OCI-LY7 (cell line): ENCODE measurements at regions of chr12 and their contacts with region 1.

Region 1: DNA sequence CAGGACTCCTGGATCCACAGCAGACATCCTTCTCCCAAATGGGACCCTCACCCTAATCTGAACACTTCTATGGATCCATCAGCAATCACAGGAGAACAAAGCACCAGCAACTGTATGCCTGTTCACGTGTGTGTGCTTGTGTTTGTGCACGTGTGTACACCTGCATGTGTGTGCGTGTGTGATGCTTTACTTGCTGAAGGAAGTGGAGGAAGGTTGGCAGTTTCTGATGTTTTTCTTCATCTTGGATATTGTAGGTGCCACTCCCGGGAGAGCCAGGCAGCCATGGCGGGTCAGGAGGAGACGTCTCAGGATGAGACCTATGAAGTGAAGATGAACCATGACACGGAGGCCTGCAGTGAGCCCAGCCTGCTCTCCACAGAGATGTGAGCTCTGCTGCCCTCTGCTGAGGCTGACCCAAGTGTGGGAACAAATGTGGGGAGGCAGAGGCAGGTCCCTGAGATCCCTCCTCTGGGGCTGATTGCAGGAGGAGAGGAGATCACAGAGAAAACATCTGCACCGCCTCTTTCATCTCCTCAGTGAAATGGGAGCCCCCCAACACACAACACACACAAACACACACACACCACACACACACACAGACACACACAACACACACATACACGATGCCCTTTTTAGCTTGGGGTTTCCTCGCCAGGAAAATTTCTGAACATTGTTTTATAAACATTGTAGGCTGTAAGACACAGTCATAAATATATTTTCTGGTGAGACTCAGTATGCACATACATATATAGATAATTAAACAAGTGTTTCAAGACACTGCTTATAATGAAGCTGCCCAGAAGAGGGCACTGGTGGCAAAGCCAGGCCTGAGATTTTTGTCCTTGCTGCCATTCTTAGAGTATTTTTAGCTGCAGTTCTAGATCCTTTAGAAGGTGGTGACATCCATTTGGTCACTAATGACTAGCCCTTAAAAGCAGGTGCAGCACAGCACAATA is 112.2 kb upstream of the FKBP4 start:
- DNase-seq: peak; percentile 55
- H3K4me3 ChIP-seq: no peak overlapping the region
- H3K27ac ChIP-seq: no peak overlapping the region
- H3K4me1 ChIP-seq: no peaks in the 10 kb centered on the region
- CTCF ChIP-seq: peak; percentile 75

Region 2: GRCh38 chr12:2783936-2784600 is 101.5 kb after region 1 on chr12:
- CTCF ChIA-PET with region 1: no interaction called
- POLR2A ChIA-PET with region 1: no interaction called
- intact Hi-C with region 1: loop called (anchors 1 kb)
- DNase-seq: peak; percentile 42
- H3K4me3 ChIP-seq: no peak overlapping the region
- H3K27ac ChIP-seq: no peak overlapping the region
- H3K4me1 ChIP-seq: no peaks in the 10 kb centered on the region
- CTCF ChIP-seq: peak; percentile 86

Region 3: GRCh38 chr12:2794736-2795289 is 112.2 kb after region 1 on chr12 and contains the start of gene FKBP4:
- CTCF ChIA-PET with region 1: no interaction called
- POLR2A ChIA-PET with region 1: no interaction called
- intact Hi-C with region 1: no loop called
- DNase-seq: peak; percentile 89
- H3K4me3 ChIP-seq: peak within 1 kb of the TSS; percentile 98
- H3K27ac ChIP-seq: no peak within 1 kb of the TSS
- H3K4me1 ChIP-seq: peaks cover 21% of the 10 kb centered on the region
- CTCF ChIP-seq: no peak
- total RNA-seq, gene FKBP4: 70.3 and 86.7 TPM in 2 replicates